Activated naive CD4-positive, alpha-beta T cell treated with anti-CD3 and anti-CD28 coated beads for 36 hours (primary cell): ENCODE measurements at regions of chr2 and their contacts with region 1.

Region 1: GRCh38 chr2:46887028-46887885 is 28.3 kb downstream of the MCFD2 start:
- DNase-seq: no peak
- H3K4me3 Mint-ChIP-seq: no peak overlapping the region
- H3K27ac Mint-ChIP-seq: peak overlapping the region; percentile 86
- H3K4me1 Mint-ChIP-seq: peaks cover 21% of the 10 kb centered on the region
- H3K27me3 Mint-ChIP-seq: no peaks in the 10 kb centered on the region

Region 2: DNA sequence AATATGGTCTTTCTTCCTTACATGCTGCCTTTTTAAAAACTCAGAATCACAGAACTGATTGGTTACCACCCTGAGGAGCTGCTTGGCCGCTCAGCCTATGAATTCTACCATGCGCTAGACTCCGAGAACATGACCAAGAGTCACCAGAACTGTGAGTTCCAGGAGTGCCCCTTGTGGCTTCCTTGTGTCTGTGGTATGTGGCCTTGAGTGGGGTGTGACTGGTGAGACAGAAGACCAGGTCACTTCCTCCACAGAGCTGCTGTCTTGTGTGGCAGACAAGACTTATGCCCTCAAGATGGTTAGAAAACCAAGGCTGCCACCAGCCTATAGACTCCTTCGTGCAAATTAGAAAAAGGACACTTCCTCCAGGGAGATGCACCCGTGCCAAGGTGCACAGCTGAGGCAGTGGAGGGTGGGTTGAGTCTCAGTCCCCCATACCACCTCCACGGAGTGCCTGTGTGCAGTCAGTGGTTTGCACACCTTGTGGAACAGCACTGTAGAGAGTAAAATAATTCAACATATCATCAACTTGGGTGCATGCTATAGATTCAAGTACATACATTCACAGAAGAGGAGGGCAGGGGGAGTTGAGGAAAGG is 517.4 kb before region 1 on chr2:
- CTCF ChIA-PET with region 1: no interaction called
- intact Hi-C with region 1: no loop called
- DNase-seq: no peak
- H3K4me3 Mint-ChIP-seq: no peak overlapping the region
- H3K27ac Mint-ChIP-seq: no peak overlapping the region
- H3K4me1 Mint-ChIP-seq: no peaks in the 10 kb centered on the region
- H3K27me3 Mint-ChIP-seq: no peaks in the 10 kb centered on the region

Region 3: GRCh38 chr2:46632349-46632748 is 254.9 kb before region 1 on chr2:
- CTCF ChIA-PET with region 1: interaction called, 5 read pairs
- intact Hi-C with region 1: loop called (anchors 1 kb)
- DNase-seq: no peak
- H3K4me3 Mint-ChIP-seq: no peak overlapping the region
- H3K27ac Mint-ChIP-seq: no peak overlapping the region
- H3K4me1 Mint-ChIP-seq: peaks cover 9% of the 10 kb centered on the region
- H3K27me3 Mint-ChIP-seq: no peaks in the 10 kb centered on the region

Region 4: DNA sequence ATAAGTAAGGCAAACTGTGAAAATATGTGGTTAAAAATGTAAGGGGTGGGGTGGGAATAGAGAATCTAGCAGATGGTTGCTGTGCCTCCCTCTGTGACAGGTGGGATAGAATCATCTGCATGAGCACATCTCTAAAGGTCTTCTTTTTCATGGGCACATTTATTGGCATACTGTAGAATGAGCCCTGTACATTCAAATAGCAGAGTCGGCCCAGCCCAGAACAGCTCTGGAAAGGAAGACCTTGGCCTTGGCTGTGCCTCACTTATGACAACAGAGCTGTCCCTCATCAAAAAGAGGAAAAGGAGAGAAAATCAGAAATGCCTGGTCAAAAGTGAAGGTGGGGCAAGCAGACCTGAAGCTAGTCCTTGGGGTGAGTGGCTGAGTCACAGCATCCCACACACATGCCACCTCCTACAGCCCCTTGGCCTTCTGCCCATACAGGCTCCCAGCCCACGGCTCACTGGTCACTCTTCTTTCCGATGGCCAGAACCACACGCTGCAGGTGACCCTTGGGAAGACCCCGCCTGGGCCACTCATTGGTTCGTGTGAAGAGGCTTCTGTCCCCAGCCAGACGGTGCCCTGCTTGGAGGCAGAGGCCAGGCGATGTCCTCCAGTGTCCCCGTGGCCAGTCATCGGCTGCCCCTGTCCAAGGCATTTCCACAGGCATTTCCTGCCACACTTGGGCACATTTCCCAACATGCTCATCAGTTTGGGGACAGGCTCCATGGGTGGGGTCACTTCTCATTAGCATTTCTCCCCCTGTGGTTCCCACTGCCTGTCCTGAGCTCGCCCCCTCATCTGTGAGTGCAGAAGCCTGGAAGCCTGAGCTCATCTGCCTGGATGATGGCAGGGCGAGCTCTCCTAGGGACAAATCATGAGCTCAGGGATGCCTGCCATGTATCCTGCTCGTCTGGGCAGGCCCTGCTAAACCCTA is 85.3 kb before region 1 on chr2:
- CTCF ChIA-PET with region 1: no interaction called
- intact Hi-C with region 1: no loop called
- DNase-seq: no peak
- H3K4me3 Mint-ChIP-seq: no peak overlapping the region
- H3K27ac Mint-ChIP-seq: no peak overlapping the region
- H3K4me1 Mint-ChIP-seq: no peaks in the 10 kb centered on the region
- H3K27me3 Mint-ChIP-seq: peaks cover under 1% of the 10 kb centered on the region

Region 5: DNA sequence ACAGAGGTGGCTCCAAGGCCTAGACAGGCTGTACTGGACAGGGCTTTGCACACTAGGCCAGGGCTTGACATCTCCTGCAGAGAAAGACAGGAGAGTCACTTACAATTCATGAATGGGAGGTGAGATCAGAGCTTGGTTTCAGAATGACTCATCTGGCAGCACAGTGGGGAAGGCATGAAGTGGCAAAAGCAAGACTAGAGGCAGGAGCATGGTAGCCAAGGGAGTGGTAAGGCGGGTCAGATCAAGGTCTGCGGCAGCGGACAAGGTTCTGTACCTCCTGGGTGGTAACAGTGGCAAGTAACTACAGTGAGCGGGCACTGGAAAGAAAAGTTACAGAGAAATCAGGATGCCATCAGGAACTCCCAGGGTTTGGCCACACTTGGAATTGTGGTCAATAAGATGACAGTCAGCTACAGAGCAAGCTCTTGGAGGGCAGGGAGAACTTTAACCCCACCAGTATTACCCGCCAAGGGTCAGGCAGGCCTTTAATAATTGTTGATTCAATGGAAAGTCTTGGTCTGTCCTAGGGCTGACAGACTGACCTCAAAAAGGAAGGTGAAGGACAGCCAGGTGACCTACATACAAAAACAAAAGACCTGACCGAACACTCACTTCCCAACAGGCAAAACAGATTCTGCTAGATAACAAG is 22.6 kb after region 1 on chr2:
- CTCF ChIA-PET with region 1: no interaction called
- intact Hi-C with region 1: no loop called
- DNase-seq: peak; percentile 74
- H3K4me3 Mint-ChIP-seq: no peak overlapping the region
- H3K27ac Mint-ChIP-seq: peak overlapping the region; percentile 5
- H3K4me1 Mint-ChIP-seq: peaks cover 42% of the 10 kb centered on the region
- H3K27me3 Mint-ChIP-seq: no peaks in the 10 kb centered on the region

Region 6: GRCh38 chr2:46942139-46942517 is 54.9 kb after region 1 on chr2:
- CTCF ChIA-PET with region 1: no interaction called
- intact Hi-C with region 1: loop called (anchors 2 kb)
- DNase-seq: peak; percentile 83
- H3K4me3 Mint-ChIP-seq: peak overlapping the region; percentile 99
- H3K27ac Mint-ChIP-seq: peak overlapping the region; percentile 100
- H3K4me1 Mint-ChIP-seq: peaks cover 44% of the 10 kb centered on the region
- H3K27me3 Mint-ChIP-seq: no peaks in the 10 kb centered on the region